Naive thymus-derived CD4-positive, alpha-beta T cell (primary cell): ENCODE measurements at regions of chr2 and their contacts with region 1.

Region 1: DNA sequence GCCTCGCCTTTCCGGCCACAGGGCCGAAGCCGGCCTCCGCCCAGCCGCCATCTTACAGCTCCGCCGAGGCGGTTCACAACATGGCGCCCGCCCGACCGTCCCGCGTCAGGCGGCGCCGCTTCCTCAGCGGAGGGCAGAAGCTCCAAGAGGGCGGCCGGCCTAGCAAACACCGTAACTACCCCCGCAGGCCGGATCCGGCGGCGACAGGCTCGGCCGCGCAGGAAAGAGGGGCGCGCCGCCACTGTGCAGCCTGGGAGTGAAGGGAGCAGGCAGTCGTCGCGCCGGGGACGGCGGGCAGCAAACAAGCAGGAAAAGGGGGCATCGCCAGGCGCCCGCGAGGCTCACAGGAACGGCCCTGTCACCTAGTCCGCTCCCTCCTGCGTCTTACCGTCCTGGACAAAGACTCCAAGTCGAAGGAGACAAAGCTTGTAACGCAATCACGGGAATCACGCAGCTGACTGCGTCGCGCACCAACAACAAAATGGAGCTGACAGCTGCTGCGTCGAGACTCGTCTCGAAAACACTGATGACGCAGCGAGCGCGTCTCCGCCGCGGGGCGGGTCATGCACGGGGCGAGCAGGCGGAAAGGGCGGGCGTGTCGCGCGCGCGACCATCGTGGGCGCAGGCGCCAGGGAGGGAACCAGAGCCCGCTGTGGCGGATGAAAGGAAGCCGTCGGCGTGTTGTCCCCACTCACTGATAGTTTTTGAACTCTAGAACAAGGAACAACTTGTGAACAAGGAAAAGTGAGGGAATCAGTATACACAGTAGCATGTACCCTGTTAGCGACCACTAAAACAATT is at the start of gene CLK1:
- DNase-seq: peak; percentile 87 to 97 (median 94)
- ATAC-seq: peak; percentile 89
- H3K4me3 ChIP-seq: peak within 1 kb of the TSS; percentile 100
- H3K4me3 Mint-ChIP-seq: peak within 1 kb of the TSS; percentile 89 to 98 (median 94)
- H3K27ac ChIP-seq: peak within 1 kb of the TSS; percentile 98
- H3K27ac Mint-ChIP-seq: peak within 1 kb of the TSS; percentile 99 to 100 (median 100)
- H3K4me1 ChIP-seq: peaks cover 23 to 26% of the 10 kb centered on the region in 2 donors
- H3K4me1 Mint-ChIP-seq: peaks cover 28 to 58% (median 48%) of the 10 kb centered on the region in 7 donors
- H3K27me3 ChIP-seq: no peaks in the 10 kb centered on the region
- H3K27me3 Mint-ChIP-seq: peaks cover 0 to 2% (median 0%) of the 10 kb centered on the region in 5 donors
- total RNA-seq, gene CLK1: 134 to 974 (median 502) TPM

Region 2: GRCh38 chr2:199955339-199956261 is 908.8 kb before region 1 on chr2 and contains the starts of genes MAIP1 and TYW5:
- CTCF ChIA-PET with region 1: no interaction called
- POLR2A ChIA-PET with region 1: interaction called, 3 read pairs
- intact Hi-C with region 1: loop called in 1 of 2 experiments (anchors 10 kb)
- DNase-seq: peak; percentile 69 to 85 (median 79)
- ATAC-seq: peak; percentile 93
- H3K4me3 ChIP-seq: peak within 1 kb of the TSS; percentile 95
- H3K4me3 Mint-ChIP-seq: peak within 1 kb of the TSS; percentile 96 to 99 (median 98)
- H3K27ac ChIP-seq: peak within 1 kb of the TSS; percentile 84
- H3K27ac Mint-ChIP-seq: peak within 1 kb of the TSS; percentile 93 to 98 (median 95)
- H3K4me1 ChIP-seq: peaks cover 27 to 34% of the 10 kb centered on the region in 2 donors
- H3K4me1 Mint-ChIP-seq: peaks cover 31 to 72% (median 59%) of the 10 kb centered on the region in 7 donors
- H3K27me3 ChIP-seq: no peaks in the 10 kb centered on the region
- H3K27me3 Mint-ChIP-seq: no peaks in the 10 kb centered on the region
- total RNA-seq, gene MAIP1: 14.5 to 27.8 (median 19.8) TPM
- total RNA-seq, gene TYW5: 6.3 to 13.3 (median 11.2) TPM

Region 3: DNA sequence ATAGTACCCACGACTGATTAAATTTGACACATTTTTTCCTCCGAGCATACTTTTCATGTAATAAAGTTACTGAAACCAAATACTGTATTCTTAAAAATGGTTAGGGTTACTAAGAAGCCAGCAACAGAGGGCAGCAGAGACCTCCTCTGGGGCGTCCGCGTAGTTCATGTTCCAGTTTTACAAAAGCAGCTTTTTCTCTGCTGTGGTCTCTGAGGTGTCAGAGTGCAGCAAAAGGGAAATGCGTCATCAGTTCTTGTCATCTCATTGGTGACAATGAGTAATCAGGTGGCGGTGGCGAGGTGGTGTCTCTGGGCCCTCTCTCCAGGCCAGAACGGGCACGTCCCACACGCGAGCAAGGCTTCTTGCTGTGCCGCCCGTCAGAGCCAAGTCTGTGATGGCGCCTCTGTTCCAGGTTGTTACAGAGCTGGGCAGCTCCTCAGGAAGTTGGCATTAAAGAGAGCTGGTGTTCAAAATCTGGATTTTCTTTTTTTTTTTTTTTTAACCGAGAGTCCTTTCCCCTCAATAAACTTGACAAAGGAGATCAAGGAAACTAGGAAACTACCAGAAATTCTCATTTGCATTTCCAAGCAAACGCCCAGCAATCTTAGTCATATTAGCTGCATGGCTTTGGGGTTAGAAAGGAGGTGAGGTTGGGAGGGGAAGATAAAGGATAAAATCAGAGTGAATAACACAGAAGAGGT is 151.2 kb before region 1 on chr2:
- CTCF ChIA-PET with region 1: interaction called, 4 read pairs
- POLR2A ChIA-PET with region 1: interaction called, 32 read pairs
- intact Hi-C with region 1: loop called (anchors 1 kb)
- DNase-seq: peak; percentile 72 to 96 (median 94)
- ATAC-seq: peak; percentile 98
- H3K4me3 ChIP-seq: peak overlapping the region; percentile 24
- H3K4me3 Mint-ChIP-seq: peak overlapping the region; percentile 75 to 88 (median 81)
- H3K27ac ChIP-seq: peak overlapping the region; percentile 82
- H3K27ac Mint-ChIP-seq: peak overlapping the region; percentile 97 to 100 (median 99)
- H3K4me1 ChIP-seq: peaks cover 5 to 8% of the 10 kb centered on the region in 2 donors
- H3K4me1 Mint-ChIP-seq: peaks cover 0 to 25% (median 12%) of the 10 kb centered on the region in 7 donors
- H3K27me3 ChIP-seq: no peaks in the 10 kb centered on the region
- H3K27me3 Mint-ChIP-seq: peaks cover 0 to 4% (median 0%) of the 10 kb centered on the region in 5 donors

Region 4: DNA sequence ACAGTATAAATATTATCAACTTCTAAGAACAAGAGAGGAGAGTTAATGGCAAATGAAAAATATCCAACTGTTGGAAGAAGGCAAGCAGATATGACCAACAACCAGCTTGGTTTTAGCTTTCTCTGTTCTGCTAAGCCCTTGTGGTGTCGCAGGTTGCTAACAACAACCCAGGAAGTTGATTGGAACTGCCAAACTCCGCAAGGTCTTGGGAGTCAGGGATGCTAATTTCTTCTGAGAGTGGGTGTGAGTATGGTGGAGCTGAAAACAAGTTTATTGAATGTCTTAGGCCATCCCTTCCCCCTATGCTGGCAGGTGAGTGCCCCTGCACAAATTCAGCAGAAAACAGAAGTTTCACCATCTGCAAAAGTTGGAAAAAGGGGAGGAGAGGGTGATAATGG is 35.1 kb before region 1 on chr2:
- CTCF ChIA-PET with region 1: no interaction called
- POLR2A ChIA-PET with region 1: interaction called, 16 read pairs
- intact Hi-C with region 1: no loop called
- DNase-seq: no peak
- ATAC-seq: no peak
- H3K4me3 ChIP-seq: no peak overlapping the region
- H3K4me3 Mint-ChIP-seq: no peak overlapping the region
- H3K27ac ChIP-seq: no peak overlapping the region
- H3K27ac Mint-ChIP-seq: peak overlapping the region in 2 of 9 donors; percentile 48 to 66
- H3K4me1 ChIP-seq: no peaks in the 10 kb centered on the region
- H3K4me1 Mint-ChIP-seq: peaks cover 0 to 10% (median 0%) of the 10 kb centered on the region in 7 donors
- H3K27me3 ChIP-seq: no peaks in the 10 kb centered on the region
- H3K27me3 Mint-ChIP-seq: no peaks in the 10 kb centered on the region

Region 5: GRCh38 chr2:200888704-200889625 is 24.6 kb after region 1 on chr2 and contains the starts of genes NIF3L1 and PPIL3:
- CTCF ChIA-PET with region 1: interaction called, 3 read pairs
- POLR2A ChIA-PET with region 1: interaction called, 156 read pairs
- intact Hi-C with region 1: loop called (anchors 1 kb)
- DNase-seq: peak; percentile 88 to 97 (median 95)
- ATAC-seq: peak; percentile 89
- H3K4me3 ChIP-seq: peak within 1 kb of the TSS; percentile 83
- H3K4me3 Mint-ChIP-seq: peak within 1 kb of the TSS; percentile 88 to 100 (median 96)
- H3K27ac ChIP-seq: peak within 1 kb of the TSS; percentile 86
- H3K27ac Mint-ChIP-seq: peak within 1 kb of the TSS; percentile 97 to 100 (median 100)
- H3K4me1 ChIP-seq: peaks cover 23 to 26% of the 10 kb centered on the region in 2 donors
- H3K4me1 Mint-ChIP-seq: peaks cover 35 to 75% (median 60%) of the 10 kb centered on the region in 7 donors
- H3K27me3 ChIP-seq: no peaks in the 10 kb centered on the region
- H3K27me3 Mint-ChIP-seq: no peaks in the 10 kb centered on the region
- total RNA-seq, gene NIF3L1: 11.5 to 33.9 (median 31.4) TPM
- total RNA-seq, gene PPIL3: 28.5 to 69.7 (median 49.1) TPM

Region 6: GRCh38 chr2:201071479-201072200 is 207.3 kb after region 1 on chr2 and contains the starts of genes HYCC2 and NDUFB3:
- CTCF ChIA-PET with region 1: no interaction called
- POLR2A ChIA-PET with region 1: interaction called, 20 read pairs
- intact Hi-C with region 1: loop called (anchors 1 kb)
- DNase-seq: peak; percentile 79 to 96 (median 95)
- ATAC-seq: peak; percentile 98
- H3K4me3 ChIP-seq: peak within 1 kb of the TSS; percentile 92
- H3K4me3 Mint-ChIP-seq: peak within 1 kb of the TSS; percentile 91 to 99 (median 94)
- H3K27ac ChIP-seq: peak within 1 kb of the TSS; percentile 83
- H3K27ac Mint-ChIP-seq: peak within 1 kb of the TSS; percentile 86 to 99 (median 95)
- H3K4me1 ChIP-seq: peaks cover 32 to 36% of the 10 kb centered on the region in 2 donors
- H3K4me1 Mint-ChIP-seq: peaks cover 31 to 74% (median 55%) of the 10 kb centered on the region in 7 donors
- H3K27me3 ChIP-seq: no peaks in the 10 kb centered on the region
- H3K27me3 Mint-ChIP-seq: no peaks in the 10 kb centered on the region
- total RNA-seq, gene HYCC2: 34.8 to 38.3 (median 36.1) TPM
- total RNA-seq, gene NDUFB3: 18.3 to 109 (median 38.3) TPM

Region 7: DNA sequence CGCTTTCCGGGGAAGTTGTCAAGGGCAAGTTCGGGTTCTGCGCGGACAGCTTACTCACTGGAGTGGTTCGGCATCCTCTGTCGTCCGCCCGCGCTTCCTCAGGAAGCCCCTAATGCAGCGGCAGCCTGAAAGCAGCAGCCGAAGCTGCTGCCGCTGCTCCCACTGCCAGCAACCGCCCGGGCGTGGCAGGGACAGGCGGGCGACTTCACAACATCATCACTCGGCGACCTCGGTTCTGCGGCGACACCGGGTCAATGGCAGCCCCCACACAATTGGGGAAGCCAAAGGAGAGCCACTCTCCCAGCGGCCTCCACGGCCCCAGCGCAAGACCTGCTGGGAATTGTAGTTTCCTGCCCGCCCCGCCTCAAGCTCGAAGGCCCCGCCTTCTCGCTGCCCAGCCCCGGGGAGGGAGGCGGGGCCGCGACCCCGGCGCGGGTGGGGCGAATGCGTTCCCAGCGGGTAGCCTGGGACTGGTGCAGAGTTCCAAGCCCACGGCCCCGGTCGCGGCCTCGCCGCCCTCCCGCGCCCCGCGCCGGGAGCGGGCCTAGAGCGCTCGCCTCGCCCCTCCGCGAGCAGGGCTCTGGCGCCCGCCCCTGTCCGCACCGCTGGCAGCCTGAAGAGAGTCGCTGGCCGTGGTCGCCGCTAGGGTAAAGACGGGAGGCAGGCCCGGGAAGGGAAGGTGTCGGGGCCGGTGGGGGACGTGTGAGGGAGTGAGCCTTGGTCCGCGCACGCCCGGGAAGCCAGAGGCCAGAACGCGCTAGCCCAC is 587.1 kb after region 1 on chr2 and contains the starts of genes STRADB and TRAK2:
- CTCF ChIA-PET with region 1: no interaction called
- POLR2A ChIA-PET with region 1: interaction called, 12 read pairs
- intact Hi-C with region 1: loop called in 1 of 2 experiments (anchors 1 kb)
- DNase-seq: peak; percentile 84 to 95 (median 92)
- ATAC-seq: peak; percentile 96
- H3K4me3 ChIP-seq: peak within 1 kb of the TSS; percentile 96
- H3K4me3 Mint-ChIP-seq: peak within 1 kb of the TSS; percentile 94 to 98 (median 97)
- H3K27ac ChIP-seq: peak within 1 kb of the TSS; percentile 83
- H3K27ac Mint-ChIP-seq: peak within 1 kb of the TSS; percentile 85 to 97 (median 95)
- H3K4me1 ChIP-seq: peaks cover 33 to 39% of the 10 kb centered on the region in 2 donors
- H3K4me1 Mint-ChIP-seq: peaks cover 27 to 69% (median 41%) of the 10 kb centered on the region in 7 donors
- H3K27me3 ChIP-seq: no peaks in the 10 kb centered on the region
- H3K27me3 Mint-ChIP-seq: peaks cover 0 to 8% (median 0%) of the 10 kb centered on the region in 5 donors
- total RNA-seq, gene STRADB: 11.9 to 18.4 (median 16.1) TPM
- total RNA-seq, gene TRAK2: 27.8 to 47.6 (median 35.2) TPM